ENCODE measurements at regions of chrX and their contacts with region 1.

Region 1: DNA sequence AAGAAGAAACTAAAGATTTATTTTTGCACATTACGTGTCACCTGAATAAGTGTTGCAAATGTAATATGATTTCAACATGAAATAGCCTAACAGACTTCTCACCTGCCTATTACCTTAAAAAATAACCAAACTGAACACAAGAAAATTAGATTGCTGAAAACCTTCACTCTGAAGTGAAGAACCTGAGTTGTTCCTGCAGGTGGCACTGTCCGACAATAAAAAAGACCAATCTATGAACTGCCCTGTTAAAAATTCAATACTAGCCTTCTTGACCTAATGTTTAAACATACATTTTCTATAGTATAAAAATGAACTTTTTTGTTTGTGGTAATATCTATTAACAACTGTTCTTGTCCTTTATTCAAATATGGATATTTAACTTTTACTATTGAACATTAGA is 69.2 kb upstream of the PNPLA4 start:
- DNase-seq: no peak
- H3K4me3 ChIP-seq: no peak overlapping the region
- H3K27ac ChIP-seq: no peak overlapping the region
- H3K4me1 ChIP-seq: no peaks in the 10 kb centered on the region
- H3K27me3 ChIP-seq: no peaks in the 10 kb centered on the region
- CTCF ChIP-seq: peak; percentile 65

Region 2: DNA sequence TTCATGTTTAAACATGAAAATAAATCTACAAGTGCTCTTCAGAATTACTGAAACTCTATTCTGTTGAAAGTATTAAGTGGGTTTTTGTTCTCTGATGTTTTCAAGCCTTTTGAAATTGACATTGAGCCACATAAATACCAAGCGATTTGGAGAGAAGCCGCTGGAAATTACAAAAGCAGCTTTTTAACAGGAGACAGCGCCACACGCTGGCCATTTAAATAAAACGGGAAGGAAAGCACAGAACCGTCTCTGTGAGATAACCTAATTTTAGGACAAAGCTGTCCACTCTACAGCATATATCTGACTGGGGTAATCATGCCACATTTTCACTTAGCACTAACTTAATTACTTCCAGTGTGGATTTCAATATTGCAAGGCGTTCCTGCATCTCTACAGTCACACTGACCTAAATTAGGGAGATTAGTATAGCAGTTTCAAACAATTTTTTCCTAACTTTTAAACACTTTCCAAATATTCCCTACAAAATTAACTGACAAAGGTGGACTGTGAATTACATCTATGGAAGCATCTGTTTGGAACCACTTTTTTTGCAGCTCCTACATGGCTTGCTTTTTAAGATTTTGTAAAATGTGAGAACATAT is 742.3 kb after region 1 on chrX:
- intact Hi-C with region 1: loop called (anchors 5 kb)
- DNase-seq: no peak
- H3K4me3 ChIP-seq: no peak overlapping the region
- H3K27ac ChIP-seq: no peak overlapping the region
- H3K4me1 ChIP-seq: no peaks in the 10 kb centered on the region
- H3K27me3 ChIP-seq: no peaks in the 10 kb centered on the region
- CTCF ChIP-seq: peak; percentile 66